AG04450 (cell line): ENCODE measurements at regions of chr15 and their contacts with region 1.

Region 1: DNA sequence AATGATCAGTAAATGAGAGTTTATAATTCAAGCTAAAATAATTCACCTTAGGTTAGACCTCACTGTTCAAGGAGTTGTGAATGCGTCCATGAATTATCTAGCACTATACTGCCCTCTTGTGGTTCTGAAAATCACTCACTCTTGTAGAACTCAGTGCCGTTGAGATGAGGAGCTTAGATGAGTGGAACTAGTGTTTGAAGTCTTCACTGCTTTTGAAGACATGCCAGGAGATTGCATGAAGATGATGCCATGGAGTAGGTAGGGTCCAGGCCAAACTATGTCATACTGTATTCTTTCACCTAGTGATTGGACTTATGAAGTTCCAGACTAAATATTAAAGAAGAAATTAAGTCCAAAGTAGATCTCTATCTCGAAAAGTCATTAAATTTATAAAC is 28.8 kb downstream of the LYSMD4 start:
- DNase-seq: peak; percentile 84
- H3K4me3 ChIP-seq: no peak overlapping the region
- H3K27ac ChIP-seq: no peak overlapping the region
- H3K27me3 ChIP-seq: no peaks in the 10 kb centered on the region
- CTCF ChIP-seq: peak; percentile 74

Region 2: DNA sequence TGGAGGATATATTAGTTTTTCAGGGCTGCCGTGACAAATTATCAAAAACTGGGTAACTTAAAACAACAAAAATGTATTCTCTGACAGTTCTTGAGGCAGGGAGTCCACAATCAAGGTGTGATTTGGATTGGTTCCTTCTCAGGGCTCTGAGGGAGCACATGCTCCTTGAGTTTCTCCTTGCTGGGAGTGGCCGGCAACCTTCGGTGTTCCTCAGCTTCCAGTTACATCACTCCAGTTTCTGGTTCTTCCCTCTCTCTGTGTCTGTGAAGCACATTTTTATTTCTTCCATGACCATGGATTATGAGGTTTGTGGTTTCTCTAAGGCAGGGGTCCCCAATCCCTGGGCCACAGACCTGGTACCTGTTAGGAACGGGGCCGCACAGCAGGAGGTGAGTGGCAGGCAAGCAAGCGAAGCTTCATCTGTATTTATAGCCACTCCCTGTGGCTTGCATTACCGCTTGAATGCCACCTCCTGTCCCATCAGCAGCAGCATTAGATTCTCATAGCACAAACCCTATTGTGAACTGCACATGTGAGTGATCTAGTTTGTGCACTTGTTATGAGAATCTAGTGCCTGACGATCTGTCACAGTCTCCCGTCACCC is 428.8 kb before region 1 on chr15:
- CTCF ChIA-PET with region 1: interaction called, 244 read pairs
- POLR2A ChIA-PET with region 1: no interaction called
- DNase-seq: no peak
- H3K4me3 ChIP-seq: no peak overlapping the region
- H3K27ac ChIP-seq: no peak overlapping the region
- H3K27me3 ChIP-seq: no peaks in the 10 kb centered on the region
- CTCF ChIP-seq: no peak

Region 3: GRCh38 chr15:99324082-99324620 is 380.3 kb before region 1 on chr15:
- CTCF ChIA-PET with region 1: interaction called, 11 read pairs
- POLR2A ChIA-PET with region 1: no interaction called
- DNase-seq: peak; percentile 20
- H3K4me3 ChIP-seq: peak overlapping the region; percentile 29
- H3K27ac ChIP-seq: peak overlapping the region; percentile 53
- H3K27me3 ChIP-seq: no peaks in the 10 kb centered on the region
- CTCF ChIP-seq: no peak

Region 4: DNA sequence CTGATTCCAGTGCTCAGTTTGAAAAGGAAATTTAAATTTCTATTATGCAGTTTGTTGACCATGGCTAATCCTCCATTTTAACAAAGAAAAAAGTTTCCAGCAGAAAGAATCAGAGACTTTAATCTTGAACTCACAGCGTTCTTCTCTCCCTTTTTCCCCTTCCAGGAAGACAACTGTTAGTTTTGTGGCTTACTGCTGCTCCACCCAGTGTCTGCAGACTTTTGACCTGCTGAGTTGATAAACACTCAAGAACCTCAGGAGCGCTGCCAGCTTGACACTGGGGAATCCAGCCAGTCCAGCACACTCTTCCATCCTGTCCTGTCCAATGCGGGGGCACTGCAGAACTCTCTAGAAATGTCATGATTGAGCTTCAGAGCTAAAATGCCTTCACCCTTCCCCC is 318.6 kb before region 1 on chr15:
- CTCF ChIA-PET with region 1: interaction called, 22 read pairs
- POLR2A ChIA-PET with region 1: no interaction called
- DNase-seq: peak; percentile 16
- H3K4me3 ChIP-seq: no peak overlapping the region
- H3K27ac ChIP-seq: no peak overlapping the region
- H3K27me3 ChIP-seq: no peaks in the 10 kb centered on the region
- CTCF ChIP-seq: no peak

Region 5: GRCh38 chr15:99476413-99477222 is 227.8 kb before region 1 on chr15:
- CTCF ChIA-PET with region 1: interaction called, 26 read pairs
- POLR2A ChIA-PET with region 1: no interaction called
- DNase-seq: peak; percentile 97
- H3K4me3 ChIP-seq: peak overlapping the region; percentile 51
- H3K27ac ChIP-seq: peak overlapping the region; percentile 92
- H3K27me3 ChIP-seq: no peaks in the 10 kb centered on the region
- CTCF ChIP-seq: no peak

Region 6: GRCh38 chr15:99656205-99656604 is 48.2 kb before region 1 on chr15:
- CTCF ChIA-PET with region 1: interaction called, 15 read pairs
- POLR2A ChIA-PET with region 1: no interaction called
- DNase-seq: no peak
- H3K4me3 ChIP-seq: no peak overlapping the region
- H3K27ac ChIP-seq: no peak overlapping the region
- H3K27me3 ChIP-seq: no peaks in the 10 kb centered on the region
- CTCF ChIP-seq: no peak

Region 7: DNA sequence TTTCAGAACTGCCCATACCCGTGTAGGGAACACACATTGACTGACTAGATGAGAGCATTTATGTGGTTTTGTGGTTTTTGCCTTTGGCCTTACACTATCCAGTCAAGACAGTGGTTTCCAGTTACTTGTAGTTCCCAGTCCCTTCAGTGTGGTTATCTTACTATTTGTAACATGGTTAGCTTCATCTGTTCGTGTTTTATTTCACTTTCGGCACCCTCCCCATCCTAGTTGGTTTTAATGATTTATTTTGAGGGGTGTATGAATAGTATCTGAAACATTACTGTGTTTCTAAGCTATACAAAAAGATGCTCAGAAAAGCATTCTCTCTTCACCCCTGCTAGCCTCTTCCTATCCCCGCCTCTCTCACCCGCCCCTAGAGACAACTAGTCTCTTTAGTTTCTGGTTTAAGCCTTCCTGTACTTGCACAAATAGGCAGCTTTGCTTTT is 14.7 kb after region 1 on chr15:
- CTCF ChIA-PET with region 1: interaction called, 74 read pairs
- POLR2A ChIA-PET with region 1: no interaction called
- DNase-seq: peak; percentile 51
- H3K4me3 ChIP-seq: no peak overlapping the region
- H3K27ac ChIP-seq: no peak overlapping the region
- H3K27me3 ChIP-seq: no peaks in the 10 kb centered on the region
- CTCF ChIP-seq: no peak